ENCODE measurements at regions of chr17 and their contacts with region 1.

Region 1: DNA sequence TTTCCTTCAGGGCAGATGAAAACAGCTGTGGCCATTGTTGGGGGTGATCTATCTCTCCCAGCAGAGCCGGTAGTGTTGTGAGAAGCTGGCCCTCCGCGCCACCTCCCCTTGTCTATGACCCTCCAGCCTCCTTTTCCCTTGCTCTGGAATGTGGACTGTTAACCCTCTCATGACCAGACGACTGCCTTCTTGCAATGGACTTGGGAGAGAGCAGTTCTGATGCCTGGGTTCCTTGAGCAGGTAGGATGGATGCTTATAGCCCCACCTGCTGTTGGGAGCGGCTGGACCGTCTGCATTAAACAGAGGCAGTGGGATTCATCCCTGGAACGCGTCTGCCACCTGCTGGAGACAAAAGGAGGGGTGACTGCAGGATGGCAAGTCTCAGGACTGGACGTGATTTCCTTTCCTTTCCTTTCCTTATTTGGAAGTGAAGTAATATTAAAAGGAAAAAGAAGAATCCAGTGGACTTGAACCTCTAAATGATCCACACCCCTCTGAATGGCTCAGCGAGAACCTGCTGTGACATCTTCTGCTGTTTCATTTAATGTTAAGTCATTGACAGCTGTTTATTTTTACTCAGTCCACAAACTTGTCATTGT is 1.8 kb upstream of the SOST start:
- DNase-seq: peak; percentile 90
- ATAC-seq: peak; percentile 88
- H3K4me3 ChIP-seq: no peak overlapping the region
- H3K27ac ChIP-seq: no peak overlapping the region
- H3K4me1 ChIP-seq: no peaks in the 10 kb centered on the region
- H3K27me3 ChIP-seq: peaks cover 9 to 41% of the 10 kb centered on the region in 2 experiments; a peak in 4 of 5 replicates
- CTCF ChIP-seq: peak; percentile 100
- EP300 ChIP-seq: no peak
- POLR2A ChIP-seq: no peak
- RAD21 ChIP-seq: peak; percentile 100

Region 2: DNA sequence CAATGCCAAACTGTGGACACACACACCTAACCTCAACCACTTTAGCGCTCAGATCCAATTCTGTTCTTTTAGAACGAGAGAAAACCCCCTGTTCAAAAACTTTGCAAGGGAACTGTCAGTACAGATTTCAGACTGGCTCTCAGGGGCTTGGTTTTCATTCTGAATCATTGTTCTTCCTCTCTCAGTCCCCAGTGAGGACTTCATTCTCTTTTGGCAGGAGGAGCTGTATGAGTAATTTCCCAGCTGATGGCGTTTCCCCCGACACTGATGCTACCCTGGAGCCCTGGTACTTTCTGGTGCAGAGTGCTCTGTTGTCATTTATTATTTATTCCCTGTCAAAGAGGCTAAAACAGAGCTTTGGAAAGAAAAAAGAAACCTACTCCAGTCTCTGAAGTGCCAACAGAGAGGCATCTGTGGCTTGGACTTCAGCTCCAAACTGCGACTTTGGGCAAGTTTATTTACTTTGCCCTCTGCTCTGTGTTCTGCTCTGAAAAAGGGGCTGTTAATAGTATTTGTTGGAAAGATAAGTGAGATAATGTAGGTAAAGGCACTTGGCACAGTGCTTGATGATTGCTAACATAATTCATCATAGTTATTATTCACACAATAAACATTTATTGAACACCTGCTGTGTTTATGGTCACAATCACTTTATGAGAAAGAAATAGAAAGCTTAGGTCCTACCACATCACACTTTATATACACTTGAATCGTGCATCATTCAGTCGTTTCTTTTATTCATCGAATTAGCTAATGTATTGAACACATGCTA is 242.6 kb before region 1 on chr17:
- CTCF ChIA-PET with region 1: interaction called, 15 read pairs
- POLR2A ChIA-PET with region 1: no interaction called
- in situ Hi-C with region 1: loop called (anchors 10 kb)
- intact Hi-C with region 1: loop called (anchors 10 kb)
- DNase-seq: no peak
- ATAC-seq: no peak
- H3K4me3 ChIP-seq: no peak overlapping the region
- H3K27ac ChIP-seq: no peak overlapping the region
- H3K4me1 ChIP-seq: peaks cover 27% of the 10 kb centered on the region
- H3K27me3 ChIP-seq: no peaks in the 10 kb centered on the region
- CTCF ChIP-seq: no peak
- EP300 ChIP-seq: no peak
- POLR2A ChIP-seq: no peak
- RAD21 ChIP-seq: no peak

Region 3: GRCh38 chr17:43530278-43531081 is 229.9 kb before region 1 on chr17:
- CTCF ChIA-PET with region 1: no interaction called
- POLR2A ChIA-PET with region 1: no interaction called
- in situ Hi-C with region 1: no loop called
- intact Hi-C with region 1: loop called (anchors 10 kb)
- DNase-seq: peak; percentile 100
- ATAC-seq: peak; percentile 74
- H3K4me3 ChIP-seq: peak overlapping the region in 2 of 3 experiments; percentile 26 to 58; a peak in 4 of 6 replicates
- H3K27ac ChIP-seq: peak overlapping the region; percentile 96
- H3K4me1 ChIP-seq: peaks cover 97% of the 10 kb centered on the region
- H3K27me3 ChIP-seq: no peaks in the 10 kb centered on the region
- CTCF ChIP-seq: peak; percentile 31; the same call in 1 of the 2 replicates
- EP300 ChIP-seq: peak; percentile 97 to 98
- POLR2A ChIP-seq: peak; percentile 82 to 93
- RAD21 ChIP-seq: peak; percentile 45

Region 4: DNA sequence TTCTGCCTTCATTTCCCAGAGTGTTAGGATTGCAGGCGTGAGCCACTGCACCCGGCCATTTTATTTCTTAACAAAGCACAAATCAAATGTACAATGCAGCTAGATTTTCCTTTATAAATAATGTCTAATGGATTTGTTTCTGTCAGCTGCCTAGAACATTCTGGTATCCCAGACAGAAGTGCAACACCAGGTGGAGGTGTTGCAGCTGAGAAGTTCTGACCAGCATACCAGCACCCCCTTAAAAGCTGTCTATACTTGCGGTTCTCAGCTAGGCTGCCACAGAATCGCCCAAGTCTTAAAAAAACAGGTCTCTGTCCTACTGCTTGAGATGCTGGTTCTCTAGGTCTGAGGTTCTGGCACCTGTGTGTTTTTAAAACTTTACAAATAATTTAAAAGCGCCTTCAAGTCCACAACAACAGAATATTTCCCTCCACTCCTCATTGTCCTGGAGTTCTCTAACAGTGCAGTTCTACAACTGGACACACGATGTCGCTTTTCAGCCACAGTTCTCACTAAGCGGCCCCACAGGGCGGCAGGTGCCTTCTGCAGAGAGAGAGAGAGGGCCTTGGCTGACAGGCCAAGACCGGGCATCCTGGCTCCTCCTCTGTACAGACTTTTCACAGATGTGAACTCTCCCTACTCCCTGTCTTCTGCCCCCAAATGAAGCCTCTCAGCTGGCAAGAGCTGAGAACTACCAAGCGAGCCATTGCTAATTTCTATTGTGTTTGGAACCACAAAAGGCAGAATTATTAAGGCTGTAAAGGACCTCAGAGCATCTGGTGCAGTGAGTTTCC is 66.1 kb before region 1 on chr17:
- CTCF ChIA-PET with region 1: interaction called, 373 read pairs
- POLR2A ChIA-PET with region 1: no interaction called
- in situ Hi-C with region 1: loop called (anchors 5 kb)
- intact Hi-C with region 1: loop called (anchors 1 kb)
- DNase-seq: peak; percentile 85
- ATAC-seq: peak; percentile 86
- H3K4me3 ChIP-seq: no peak overlapping the region
- H3K27ac ChIP-seq: no peak overlapping the region
- H3K4me1 ChIP-seq: peaks cover 33% of the 10 kb centered on the region
- H3K27me3 ChIP-seq: peaks cover 11 to 31% of the 10 kb centered on the region in 2 experiments
- CTCF ChIP-seq: peak; percentile 96
- EP300 ChIP-seq: no peak
- POLR2A ChIP-seq: no peak
- RAD21 ChIP-seq: peak; percentile 98

Region 5: GRCh38 chr17:43720311-43721060 is 39.9 kb before region 1 on chr17:
- CTCF ChIA-PET with region 1: interaction called, 3 read pairs
- POLR2A ChIA-PET with region 1: no interaction called
- in situ Hi-C with region 1: no loop called
- intact Hi-C with region 1: loop called (anchors 2 kb)
- DNase-seq: peak; percentile 41
- ATAC-seq: peak; percentile 79
- H3K4me3 ChIP-seq: peak overlapping the region; percentile 58 to 81 (median 73)
- H3K27ac ChIP-seq: no peak overlapping the region
- H3K4me1 ChIP-seq: peaks cover 15% of the 10 kb centered on the region
- H3K27me3 ChIP-seq: peaks cover 3 to 46% of the 10 kb centered on the region in 2 experiments; a peak in 4 of 5 replicates
- CTCF ChIP-seq: peak; percentile 6; the same call in 1 of the 2 replicates
- EP300 ChIP-seq: no peak
- POLR2A ChIP-seq: peak in 1 of 2 experiments; percentile 63; a peak in 2 of 4 replicates
- RAD21 ChIP-seq: peak; percentile 29; the same call in 1 of the 2 replicates

Region 6: DNA sequence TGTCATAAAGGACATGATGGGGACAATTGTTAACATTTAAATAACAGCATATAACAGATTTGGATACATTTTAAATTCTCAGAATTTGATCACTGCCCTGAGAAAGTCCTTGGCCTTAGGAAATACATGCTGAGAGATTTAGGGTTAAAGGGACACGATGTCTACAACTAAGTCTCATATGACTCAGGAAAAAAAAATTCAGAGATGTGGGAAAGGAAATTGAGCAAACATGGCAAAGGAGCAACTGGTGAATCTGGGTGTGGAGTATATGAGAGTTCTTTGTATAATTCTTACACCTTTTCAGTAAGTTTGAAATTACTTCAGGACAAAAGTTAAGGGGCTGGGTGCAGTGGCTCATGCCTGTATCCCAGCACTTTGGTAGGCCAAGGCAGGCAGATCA is 54.4 kb after region 1 on chr17:
- CTCF ChIA-PET with region 1: no interaction called
- POLR2A ChIA-PET with region 1: no interaction called
- in situ Hi-C with region 1: no loop called
- intact Hi-C with region 1: no loop called
- DNase-seq: no peak
- ATAC-seq: no peak
- H3K4me3 ChIP-seq: no peak overlapping the region
- H3K27ac ChIP-seq: no peak overlapping the region
- H3K4me1 ChIP-seq: no peaks in the 10 kb centered on the region
- H3K27me3 ChIP-seq: no peaks in the 10 kb centered on the region
- CTCF ChIP-seq: no peak
- EP300 ChIP-seq: no peak
- POLR2A ChIP-seq: no peak
- RAD21 ChIP-seq: no peak

Region 7: GRCh38 chr17:43983515-43984411 is 223.4 kb after region 1 on chr17:
- CTCF ChIA-PET with region 1: no interaction called
- POLR2A ChIA-PET with region 1: no interaction called
- in situ Hi-C with region 1: no loop called
- intact Hi-C with region 1: no loop called
- DNase-seq: peak; percentile 67
- ATAC-seq: peak; percentile 93
- H3K4me3 ChIP-seq: peak overlapping the region; percentile 41 to 72 (median 51)
- H3K27ac ChIP-seq: no peak overlapping the region
- H3K4me1 ChIP-seq: peaks cover 23% of the 10 kb centered on the region
- H3K27me3 ChIP-seq: peaks cover 6 to 79% of the 10 kb centered on the region in 2 experiments
- CTCF ChIP-seq: peak; percentile 60
- EP300 ChIP-seq: peak in 1 of 2 experiments; percentile 77; a peak in 2 of 4 replicates
- POLR2A ChIP-seq: no peak
- RAD21 ChIP-seq: peak; percentile 10; the same call in 1 of the 2 replicates